Activated CD8-positive, alpha-beta memory T cell treated with anti-CD3 and anti-CD28 coated beads, Interleukin-2, amount 10 ng/mL, durations not matched to agents 7 days and 5 days (primary cell): ENCODE measurements at regions of chr9 and their contacts with region 1.

Region 1: GRCh38 chr9:132669698-132670456 is at the start of gene DDX31:
- DNase-seq: peak; percentile 88
- ATAC-seq: peak; percentile 92
- H3K4me3 Mint-ChIP-seq: peak within 1 kb of the TSS; percentile 86
- H3K27ac Mint-ChIP-seq: peak within 1 kb of the TSS; percentile 87
- H3K4me1 Mint-ChIP-seq: peaks cover 41% of the 10 kb centered on the region
- H3K27me3 Mint-ChIP-seq: no peaks in the 10 kb centered on the region
- total RNA-seq, gene DDX31: 14.6 to 19.6 TPM

Region 2: GRCh38 chr9:132641221-132641620 is 28.7 kb before region 1 on chr9:
- CTCF ChIA-PET with region 1: no interaction called
- DNase-seq: no peak
- ATAC-seq: no peak
- H3K4me3 Mint-ChIP-seq: no peak overlapping the region
- H3K27ac Mint-ChIP-seq: no peak overlapping the region
- H3K4me1 Mint-ChIP-seq: peaks cover 2% of the 10 kb centered on the region
- H3K27me3 Mint-ChIP-seq: no peaks in the 10 kb centered on the region

Region 3: DNA sequence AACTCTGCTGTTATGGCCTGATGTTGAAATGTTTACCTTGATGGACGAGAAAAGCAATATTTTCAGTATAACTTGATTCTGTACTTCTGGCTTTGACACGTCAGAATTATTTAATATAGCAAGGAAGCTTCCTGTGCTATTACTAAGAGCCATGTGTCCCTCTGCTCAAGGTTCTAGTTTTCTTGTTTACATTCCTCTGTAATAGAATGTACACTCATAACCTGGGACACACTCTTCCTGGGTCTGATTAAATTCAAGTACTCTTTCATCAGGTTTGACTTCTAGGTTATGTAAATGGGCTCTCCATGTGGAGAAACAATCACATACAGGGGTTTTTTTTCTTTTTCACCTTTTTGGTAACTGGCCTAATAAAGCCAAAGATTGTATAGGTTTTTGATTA is 33.5 kb after region 1 on chr9:
- CTCF ChIA-PET with region 1: no interaction called
- DNase-seq: no peak
- ATAC-seq: no peak
- H3K4me3 Mint-ChIP-seq: no peak overlapping the region
- H3K27ac Mint-ChIP-seq: no peak overlapping the region
- H3K4me1 Mint-ChIP-seq: no peaks in the 10 kb centered on the region
- H3K27me3 Mint-ChIP-seq: peaks cover 19% of the 10 kb centered on the region

Region 4: GRCh38 chr9:132768932-132769905 is 99.3 kb after region 1 on chr9:
- CTCF ChIA-PET with region 1: interaction called, 13 read pairs
- DNase-seq: peak; percentile 82
- ATAC-seq: peak; percentile 72
- H3K4me3 Mint-ChIP-seq: peak overlapping the region; percentile 87
- H3K27ac Mint-ChIP-seq: peak overlapping the region; percentile 95
- H3K4me1 Mint-ChIP-seq: peaks cover 23% of the 10 kb centered on the region
- H3K27me3 Mint-ChIP-seq: peaks cover 7% of the 10 kb centered on the region